Colonic mucosa (tissue), 4 donors: ENCODE measurements at regions of chr3 and their contacts with region 1.

Region 1: GRCh38 chr3:136250226-136250902 is at the start of gene PCCB:
- DNase-seq: peak; percentile 97
- H3K4me3 ChIP-seq: peak within 1 kb of the TSS; percentile 55
- H3K27ac ChIP-seq: peak within 1 kb of the TSS; percentile 92
- H3K4me1 ChIP-seq: peaks cover 8% of the 10 kb centered on the region
- H3K27me3 ChIP-seq: no peaks in the 10 kb centered on the region
- CTCF ChIP-seq: peak; percentile 85
- total RNA-seq, gene PCCB: 60.0 to 67.0 TPM

Region 2: GRCh38 chr3:136196401-136197158 is 53.8 kb before region 1 on chr3:
- intact Hi-C with region 1: loop called (anchors 5 kb)
- DNase-seq: peak; percentile 99
- H3K4me3 ChIP-seq: peak overlapping the region; percentile 72
- H3K27ac ChIP-seq: peak overlapping the region; percentile 98
- H3K4me1 ChIP-seq: peaks cover 7% of the 10 kb centered on the region
- H3K27me3 ChIP-seq: no peaks in the 10 kb centered on the region
- CTCF ChIP-seq: no peak